ENCODE measurements at regions of chr4 and their contacts with region 1.

Region 1: GRCh38 chr4:102862016-102862415 is 6.8 kb upstream of the CISD2 start:
- DNase-seq: no peak
- ATAC-seq: no peak
- H3K4me3 ChIP-seq: no peak overlapping the region
- H3K27ac ChIP-seq: no peak overlapping the region
- H3K4me1 ChIP-seq: peaks cover 5% of the 10 kb centered on the region; the same call in 1 of the 2 replicates
- H3K27me3 ChIP-seq: no peaks in the 10 kb centered on the region
- CTCF ChIP-seq: no peak
- EP300 ChIP-seq: no peak
- POLR2A ChIP-seq: no peak
- RAD21 ChIP-seq: no peak

Region 2: DNA sequence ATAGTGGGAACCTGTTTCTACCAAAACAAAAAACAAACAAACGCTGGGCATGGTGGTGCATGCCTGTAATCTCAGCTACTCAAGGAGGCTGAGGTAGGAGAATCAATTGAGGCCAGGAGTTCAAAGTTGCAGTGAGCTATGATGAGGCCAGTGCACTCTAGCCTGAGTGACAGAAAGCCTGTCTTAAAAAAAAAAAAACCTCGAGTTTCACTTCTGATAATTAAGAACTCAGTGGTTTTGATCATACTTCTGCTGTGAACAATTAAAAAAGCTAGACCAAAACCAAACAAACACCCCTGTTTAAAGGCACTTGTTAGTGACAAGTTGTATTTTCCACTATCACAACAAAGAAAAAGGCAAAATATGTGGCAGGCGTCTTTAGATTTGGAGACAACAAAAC is 19.6 kb before region 1 on chr4:
- CTCF ChIA-PET with region 1: interaction called, 3 read pairs
- POLR2A ChIA-PET with region 1: interaction called, 4 read pairs
- RAD21 ChIA-PET with region 1: no interaction called
- SMC1A ChIA-PET with region 1: interaction called, 10 read pairs
- in situ Hi-C with region 1: no loop called
- intact Hi-C with region 1: no loop called
- DNase-seq: no peak
- ATAC-seq: peak; percentile 62
- H3K4me3 ChIP-seq: no peak overlapping the region
- H3K27ac ChIP-seq: no peak overlapping the region
- H3K4me1 ChIP-seq: no peaks in the 10 kb centered on the region
- H3K27me3 ChIP-seq: no peaks in the 10 kb centered on the region
- CTCF ChIP-seq: no peak
- EP300 ChIP-seq: no peak
- POLR2A ChIP-seq: no peak
- RAD21 ChIP-seq: no peak

Measured in GM12878 (cell line).